Sigmoid colon (tissue), 7 donors: ENCODE measurements at regions of chr3 and their contacts with region 1.

Region 1: DNA sequence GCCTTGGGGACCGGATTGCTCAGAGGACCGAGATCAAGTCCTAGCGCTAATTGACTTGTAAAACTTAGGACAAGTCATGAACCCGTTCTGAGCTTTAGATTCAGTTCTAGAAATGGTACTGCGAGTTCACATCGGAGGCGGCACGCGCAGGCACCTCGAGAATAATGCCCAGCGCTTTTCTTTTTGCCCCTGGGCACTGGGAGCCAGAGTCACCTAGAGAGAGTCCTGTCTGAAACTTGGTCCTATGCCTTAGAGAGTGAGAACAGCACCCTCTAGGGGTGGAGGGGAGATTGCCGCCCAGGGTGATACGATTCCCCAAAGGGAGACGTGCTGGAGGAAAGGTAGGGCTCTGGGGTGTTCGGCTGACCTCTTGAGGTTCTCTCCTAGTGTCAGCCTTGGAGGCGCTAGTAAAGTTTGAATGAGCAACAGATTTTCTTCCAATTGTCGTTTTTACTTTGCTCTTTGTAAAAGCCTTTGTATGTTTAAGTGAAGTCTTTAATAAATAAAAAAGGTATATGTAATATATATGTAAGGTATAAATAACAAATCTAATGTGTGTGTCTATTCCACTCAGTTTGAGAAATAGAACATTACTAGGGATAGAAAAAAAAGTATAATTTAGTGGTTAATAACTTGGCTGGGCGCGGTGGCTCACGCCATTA is 826 bp downstream of the EEF1AKMT4 start:
- DNase-seq: peak; percentile 88
- H3K4me3 ChIP-seq: peak overlapping the region; percentile 71 to 88 (median 81)
- H3K27ac ChIP-seq: peak overlapping the region; percentile 61 to 86 (median 84)
- H3K4me1 ChIP-seq: peaks cover 0 to 28% (median 15%) of the 10 kb centered on the region in 4 donors
- H3K27me3 ChIP-seq: no peaks in the 10 kb centered on the region
- CTCF ChIP-seq: peak; percentile 42 to 93 (median 86)
- EP300 ChIP-seq: no peak
- POLR2A ChIP-seq: no peak

Region 2: DNA sequence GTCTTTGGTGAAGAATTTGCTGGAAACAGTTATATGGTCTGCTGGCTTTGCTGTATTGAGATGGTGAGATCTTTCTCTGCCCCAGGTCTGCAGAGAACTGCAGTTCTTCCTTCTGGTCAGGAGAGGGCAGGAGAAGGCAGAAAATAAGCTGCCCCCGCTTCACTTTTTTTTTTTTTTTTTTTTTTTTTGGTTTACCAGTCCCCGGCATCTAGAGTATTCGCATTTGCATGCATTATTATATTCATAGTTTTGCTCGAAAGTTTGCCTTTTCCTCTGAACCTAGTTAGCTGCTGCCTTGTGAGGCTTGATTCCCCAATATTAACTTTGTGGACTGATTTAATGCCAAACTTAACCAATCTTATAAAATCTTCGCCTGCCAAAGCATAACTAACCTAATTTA is 355.0 kb before region 1 on chr3:
- intact Hi-C with region 1: loop called (anchors 1 kb)
- DNase-seq: no peak
- H3K4me3 ChIP-seq: no peak overlapping the region
- H3K27ac ChIP-seq: no peak overlapping the region
- H3K4me1 ChIP-seq: peaks cover 0 to 5% (median 0%) of the 10 kb centered on the region in 4 donors
- H3K27me3 ChIP-seq: peaks cover 0 to 22% (median 0%) of the 10 kb centered on the region in 3 donors
- CTCF ChIP-seq: peak; percentile 52 to 60 (median 58)
- EP300 ChIP-seq: no peak
- POLR2A ChIP-seq: no peak

Region 3: DNA sequence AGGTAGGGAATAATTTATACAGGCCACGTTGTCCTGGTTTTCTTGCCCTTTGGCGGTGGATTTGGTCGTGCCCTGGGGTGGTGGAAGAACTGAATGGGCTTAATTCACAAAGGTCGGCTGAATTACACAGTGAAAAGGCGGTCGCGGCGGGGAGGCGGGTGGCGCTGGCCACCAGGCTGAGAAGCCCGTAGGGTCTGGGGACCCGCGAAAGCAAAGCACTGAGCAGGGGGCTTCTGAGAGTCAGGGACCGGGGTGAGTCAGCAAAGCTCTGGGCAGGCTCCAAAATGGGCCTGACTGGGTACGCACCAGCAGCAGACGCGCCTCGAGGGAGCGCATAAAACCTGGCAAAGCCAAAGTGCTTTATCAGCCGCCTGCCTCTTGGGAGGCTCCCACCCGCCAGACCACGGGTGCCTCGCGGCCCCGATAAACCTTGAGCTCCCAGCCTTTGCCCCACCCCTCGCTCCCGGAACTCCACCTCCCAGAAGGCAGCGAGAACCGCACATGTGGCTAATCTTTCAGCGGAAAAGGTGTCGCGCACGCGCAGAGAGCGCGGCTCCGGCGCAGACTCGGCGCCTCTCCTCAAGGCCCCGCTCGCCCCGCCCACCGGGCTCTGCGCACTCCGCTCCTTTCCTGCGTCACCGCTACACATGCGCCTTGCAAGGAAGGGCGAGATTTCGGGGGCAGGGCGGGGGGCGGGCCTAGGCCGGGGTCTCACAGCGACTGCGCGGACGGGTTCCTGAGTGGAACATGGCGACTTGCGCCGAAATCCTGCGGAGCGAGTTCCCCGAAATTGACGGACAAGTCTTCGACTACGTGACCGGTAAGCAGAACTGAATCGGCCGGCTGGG is 64.6 kb before region 1 on chr3 and contains the start of gene ABCF3:
- intact Hi-C with region 1: loop called (anchors 5 kb)
- DNase-seq: peak; percentile 100
- H3K4me3 ChIP-seq: peak within 1 kb of the TSS; percentile 71 to 98 (median 96)
- H3K27ac ChIP-seq: peak within 1 kb of the TSS; percentile 87 to 90 (median 88)
- H3K4me1 ChIP-seq: peaks cover 0 to 37% (median 29%) of the 10 kb centered on the region in 4 donors
- H3K27me3 ChIP-seq: no peaks in the 10 kb centered on the region
- CTCF ChIP-seq: no peak
- EP300 ChIP-seq: peak in 1 of 4 donors; percentile 48
- POLR2A ChIP-seq: peak; percentile 62 to 84
- total RNA-seq, gene ABCF3: 32.4 to 51.3 (median 39.2) TPM

Region 4: GRCh38 chr3:184322731-184323487 is 72.6 kb after region 1 on chr3:
- intact Hi-C with region 1: no loop called
- DNase-seq: no peak
- H3K4me3 ChIP-seq: no peak overlapping the region
- H3K27ac ChIP-seq: peak overlapping the region; percentile 52 to 99 (median 98)
- H3K4me1 ChIP-seq: peaks cover 0 to 46% (median 45%) of the 10 kb centered on the region in 4 donors
- H3K27me3 ChIP-seq: no peaks in the 10 kb centered on the region
- CTCF ChIP-seq: no peak
- EP300 ChIP-seq: no peak
- POLR2A ChIP-seq: no peak